B cell (primary cell): ENCODE measurements at regions of chr6 and their contacts with region 1.

Region 1: GRCh38 chr6:87929843-87930288 is 117.8 kb upstream of the SPACA1 start:
- DNase-seq: peak; percentile 83
- ATAC-seq: peak; percentile 70
- H3K4me3 ChIP-seq: no peak overlapping the region
- H3K4me3 Mint-ChIP-seq: no peak overlapping the region
- H3K27ac ChIP-seq: no peak overlapping the region
- H3K27ac Mint-ChIP-seq: no peak overlapping the region
- H3K4me1 ChIP-seq: peaks cover 28 to 30% of the 10 kb centered on the region in 2 donors
- H3K4me1 Mint-ChIP-seq: peaks cover 34% of the 10 kb centered on the region
- H3K27me3 ChIP-seq: no peaks in the 10 kb centered on the region
- H3K27me3 Mint-ChIP-seq: no peaks in the 10 kb centered on the region
- CTCF ChIP-seq: peak; percentile 81

Region 2: GRCh38 chr6:87393022-87393622 is 536.7 kb before region 1 on chr6:
- CTCF ChIA-PET with region 1: interaction called, 3 read pairs
- POLR2A ChIA-PET with region 1: no interaction called
- intact Hi-C with region 1: loop called (anchors 1 kb)
- DNase-seq: peak; percentile 79
- ATAC-seq: peak; percentile 86
- H3K4me3 ChIP-seq: no peak overlapping the region
- H3K4me3 Mint-ChIP-seq: no peak overlapping the region
- H3K27ac ChIP-seq: no peak overlapping the region
- H3K27ac Mint-ChIP-seq: no peak overlapping the region
- H3K4me1 ChIP-seq: no peaks in the 10 kb centered on the region
- H3K4me1 Mint-ChIP-seq: peaks cover 5% of the 10 kb centered on the region
- H3K27me3 ChIP-seq: no peaks in the 10 kb centered on the region
- H3K27me3 Mint-ChIP-seq: no peaks in the 10 kb centered on the region
- CTCF ChIP-seq: peak; percentile 84

Region 3: DNA sequence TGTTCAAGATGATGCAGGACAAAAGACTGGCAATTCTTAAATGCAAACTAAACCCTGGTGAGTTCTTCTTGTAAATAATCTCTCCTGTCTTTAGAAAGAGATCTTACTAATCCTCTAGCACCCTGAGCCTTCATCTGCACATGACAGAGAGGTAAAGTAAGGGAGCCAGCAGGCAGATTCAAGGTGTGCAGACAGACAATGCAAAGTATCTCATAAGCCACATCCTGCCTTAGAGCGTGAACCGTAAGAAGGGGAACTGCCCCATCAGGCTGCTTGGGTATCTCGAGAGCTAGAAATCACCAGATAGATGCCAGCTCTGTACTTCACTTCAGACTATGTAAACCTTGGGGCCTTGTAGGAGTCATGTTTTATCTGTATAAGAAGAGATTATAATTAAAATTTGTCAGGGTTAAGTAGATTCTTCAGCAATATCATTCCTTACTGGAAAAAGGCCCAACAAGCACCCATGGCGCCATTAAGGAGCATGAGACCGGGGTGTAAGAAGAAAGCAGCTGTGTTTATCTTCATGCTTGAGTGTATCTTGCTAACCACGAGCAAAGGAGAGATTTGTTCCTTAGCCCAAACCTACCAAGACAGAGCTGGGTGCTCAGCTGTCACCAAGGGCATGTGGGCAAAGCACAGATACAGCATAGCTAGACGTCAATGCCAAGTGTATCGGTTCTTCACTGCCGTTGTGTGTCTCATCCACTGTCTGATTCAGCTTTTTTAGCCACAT is 211.9 kb after region 1 on chr6:
- CTCF ChIA-PET with region 1: interaction called, 21 read pairs
- POLR2A ChIA-PET with region 1: interaction called, 3 read pairs
- intact Hi-C with region 1: no loop called
- DNase-seq: peak; percentile 91
- ATAC-seq: peak; percentile 91
- H3K4me3 ChIP-seq: peak overlapping the region in 2 of 5 experiments; percentile 30 to 33
- H3K4me3 Mint-ChIP-seq: peak overlapping the region; percentile 67
- H3K27ac ChIP-seq: peak overlapping the region; percentile 87 to 95
- H3K27ac Mint-ChIP-seq: peak overlapping the region; percentile 96
- H3K4me1 ChIP-seq: peaks cover 45 to 49% of the 10 kb centered on the region in 2 donors
- H3K4me1 Mint-ChIP-seq: peaks cover 56% of the 10 kb centered on the region
- H3K27me3 ChIP-seq: no peaks in the 10 kb centered on the region
- H3K27me3 Mint-ChIP-seq: no peaks in the 10 kb centered on the region
- CTCF ChIP-seq: no peak

Region 4: DNA sequence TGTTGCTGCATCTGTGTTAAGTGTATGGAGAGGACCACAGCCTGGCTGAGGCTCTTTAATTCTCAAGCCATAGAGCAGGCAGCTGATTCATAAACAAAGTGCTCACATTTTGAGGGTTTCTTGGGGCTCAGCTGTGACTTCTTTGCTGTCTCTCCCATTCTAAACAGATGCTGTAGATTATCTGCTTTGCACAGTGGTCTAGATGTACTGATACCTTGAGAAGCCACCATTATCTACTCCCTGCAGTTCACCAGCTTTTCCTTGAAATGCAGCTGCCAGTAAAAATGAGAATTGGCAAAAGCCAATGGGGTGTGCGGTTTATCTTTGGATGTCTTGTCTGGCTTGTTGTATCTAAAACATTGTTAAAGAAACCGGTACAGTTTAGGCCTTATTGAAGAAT is 241.4 kb after region 1 on chr6:
- CTCF ChIA-PET with region 1: interaction called, 52 read pairs
- POLR2A ChIA-PET with region 1: interaction called, 6 read pairs
- intact Hi-C with region 1: loop called (anchors 1 kb)
- DNase-seq: no peak
- ATAC-seq: no peak
- H3K4me3 ChIP-seq: no peak overlapping the region
- H3K4me3 Mint-ChIP-seq: no peak overlapping the region
- H3K27ac ChIP-seq: no peak overlapping the region
- H3K27ac Mint-ChIP-seq: no peak overlapping the region
- H3K4me1 ChIP-seq: peaks cover 24 to 33% of the 10 kb centered on the region in 2 donors
- H3K4me1 Mint-ChIP-seq: peaks cover 30% of the 10 kb centered on the region
- H3K27me3 ChIP-seq: peaks cover 0 to 11% (median 4%) of the 10 kb centered on the region in 4 experiments
- H3K27me3 Mint-ChIP-seq: peaks cover 10% of the 10 kb centered on the region
- CTCF ChIP-seq: no peak

Region 5: DNA sequence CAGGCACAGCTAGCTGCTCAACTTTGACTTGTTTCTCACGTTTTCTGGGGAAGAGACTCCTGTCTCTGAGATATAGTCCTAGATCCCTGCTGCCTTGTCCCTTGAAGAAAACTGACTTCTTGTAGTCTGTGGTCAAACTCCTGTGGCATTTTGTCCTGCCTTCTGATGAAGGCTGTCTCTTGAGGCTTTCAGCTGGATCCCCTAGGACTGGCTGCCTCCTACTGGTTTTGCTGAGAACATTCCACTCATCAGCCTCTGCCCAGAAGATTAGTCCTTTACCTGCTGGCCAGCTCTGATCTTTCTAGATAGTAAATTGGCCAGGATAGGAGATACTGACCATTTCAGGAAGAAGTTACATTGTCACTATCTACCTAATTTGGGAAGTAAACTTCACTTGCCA is 308.2 kb after region 1 on chr6:
- CTCF ChIA-PET with region 1: interaction called, 176 read pairs
- POLR2A ChIA-PET with region 1: no interaction called
- intact Hi-C with region 1: loop called (anchors 1 kb)
- DNase-seq: peak; percentile 78
- ATAC-seq: peak; percentile 78
- H3K4me3 ChIP-seq: no peak overlapping the region
- H3K4me3 Mint-ChIP-seq: no peak overlapping the region
- H3K27ac ChIP-seq: no peak overlapping the region
- H3K27ac Mint-ChIP-seq: no peak overlapping the region
- H3K4me1 ChIP-seq: peaks cover 0 to 4% of the 10 kb centered on the region in 2 donors
- H3K4me1 Mint-ChIP-seq: peaks cover 7% of the 10 kb centered on the region
- H3K27me3 ChIP-seq: no peaks in the 10 kb centered on the region
- H3K27me3 Mint-ChIP-seq: no peaks in the 10 kb centered on the region
- CTCF ChIP-seq: peak; percentile 83

Region 6: GRCh38 chr6:88780714-88781389 is 851.0 kb after region 1 on chr6:
- CTCF ChIA-PET with region 1: interaction called, 30 read pairs
- POLR2A ChIA-PET with region 1: no interaction called
- intact Hi-C with region 1: loop called (anchors 1 kb)
- DNase-seq: peak; percentile 82
- ATAC-seq: peak; percentile 81
- H3K4me3 ChIP-seq: no peak overlapping the region
- H3K4me3 Mint-ChIP-seq: no peak overlapping the region
- H3K27ac ChIP-seq: no peak overlapping the region
- H3K27ac Mint-ChIP-seq: no peak overlapping the region
- H3K4me1 ChIP-seq: peaks cover 0 to 13% of the 10 kb centered on the region in 2 donors
- H3K4me1 Mint-ChIP-seq: peaks cover 16% of the 10 kb centered on the region
- H3K27me3 ChIP-seq: no peaks in the 10 kb centered on the region
- H3K27me3 Mint-ChIP-seq: no peaks in the 10 kb centered on the region
- CTCF ChIP-seq: peak; percentile 90